Panc1 (cell line): ENCODE measurements at regions of chr11 and their contacts with region 1.

Region 1: DNA sequence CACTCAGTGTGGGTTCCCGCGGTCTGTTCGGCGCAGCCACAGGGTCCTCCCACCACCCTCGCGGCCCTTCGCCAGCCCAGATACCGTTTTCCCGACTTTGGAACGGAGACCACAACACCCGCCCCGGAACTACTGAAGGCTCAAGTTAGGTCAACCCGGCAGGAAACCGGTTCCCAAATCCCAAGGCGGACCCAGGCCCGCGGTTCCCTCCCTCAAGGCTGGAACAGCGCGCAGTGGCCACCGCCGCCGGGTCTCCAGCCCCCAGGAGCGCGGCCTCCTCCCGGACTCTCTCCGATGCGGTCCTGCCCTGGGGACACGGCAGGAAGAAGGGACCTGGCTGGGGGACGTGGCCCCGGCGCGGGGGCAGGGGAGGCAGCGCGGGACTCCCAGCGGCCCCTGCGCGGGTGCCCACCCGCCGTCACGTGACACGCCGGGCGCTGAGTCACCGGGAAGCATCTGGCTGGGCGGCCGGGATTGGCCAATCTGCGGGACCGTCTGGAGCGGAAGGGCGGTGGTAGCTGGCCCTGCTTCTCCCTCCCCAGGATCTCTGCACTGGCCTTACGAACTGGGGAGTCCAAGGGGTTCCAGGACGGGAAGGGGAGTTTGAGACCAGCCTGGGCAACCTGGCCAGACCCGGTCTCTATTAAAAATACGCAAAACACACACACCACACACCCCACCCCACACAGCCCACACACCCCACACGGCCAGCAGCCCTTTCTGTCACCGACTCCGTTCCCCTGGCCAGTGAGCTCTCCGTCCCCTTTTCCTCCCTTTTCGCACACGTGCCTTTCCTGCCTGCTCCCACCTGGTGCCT is 21.5 kb upstream of the MALAT1 start:
- DNase-seq: no peak
- ATAC-seq: peak; percentile 80
- H3K4me3 ChIP-seq: peak overlapping the region; percentile 60 to 68
- H3K27ac ChIP-seq: peak overlapping the region; percentile 100
- H3K4me1 ChIP-seq: peaks cover 75% of the 10 kb centered on the region
- H3K27me3 ChIP-seq: no peaks in the 10 kb centered on the region
- CTCF ChIP-seq: no peak

Region 2: GRCh38 chr11:65487413-65488272 is 10.3 kb after region 1 on chr11:
- CTCF ChIA-PET with region 1: interaction called, 9 read pairs
- POLR2A ChIA-PET with region 1: interaction called, 126 read pairs
- in situ Hi-C with region 1: no loop called
- intact Hi-C with region 1: no loop called
- DNase-seq: peak; percentile 96
- ATAC-seq: peak; percentile 82
- H3K4me3 ChIP-seq: 0 out of 4 replicates have a peak overlapping the region, but pooled peaks of 1 of the 2 experiments have one; percentile 3
- H3K27ac ChIP-seq: peak overlapping the region; percentile 100
- H3K4me1 ChIP-seq: peaks cover 87% of the 10 kb centered on the region
- H3K27me3 ChIP-seq: no peaks in the 10 kb centered on the region
- CTCF ChIP-seq: no peak